ENCODE measurements at regions of chr2 and their contacts with region 1.

Region 1: DNA sequence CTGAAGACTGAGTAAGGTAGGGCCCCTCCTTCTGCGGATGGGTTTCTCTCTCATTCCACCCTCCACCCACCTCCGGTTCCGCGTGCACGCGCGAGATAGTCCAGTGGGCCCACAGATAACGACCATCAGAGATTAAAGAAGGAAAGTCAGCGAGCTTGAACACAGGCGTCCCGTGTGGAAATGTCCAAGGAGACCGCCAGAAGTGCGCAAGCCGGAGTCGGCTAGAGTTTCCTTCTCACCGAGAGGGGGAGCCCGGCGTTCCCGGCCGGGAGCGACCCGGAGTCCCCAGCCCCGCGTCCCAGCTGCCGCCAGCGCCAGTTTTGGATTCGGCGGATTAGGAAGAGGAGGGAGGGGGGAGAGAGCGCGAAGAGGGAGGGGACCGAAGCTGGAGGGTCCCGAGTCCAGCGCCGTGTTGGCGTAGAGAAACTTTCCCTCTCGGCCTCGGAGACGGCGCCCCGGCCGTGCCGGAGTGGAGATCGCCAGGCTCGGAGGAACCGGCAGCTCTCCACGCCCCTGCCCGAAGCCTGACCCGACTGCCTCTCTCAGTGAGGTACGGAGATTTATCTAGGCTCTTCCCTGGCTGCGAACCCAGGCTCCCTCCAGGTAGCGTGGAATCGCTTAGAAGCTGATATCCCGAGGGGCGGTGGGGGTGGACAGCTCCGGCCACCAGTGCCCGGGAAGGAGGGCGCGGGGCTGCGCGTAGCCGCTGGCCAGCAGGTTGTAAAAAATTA is at the start of gene GULP1:
- DNase-seq: peak; percentile 60 to 86 (median 67)
- ATAC-seq: peak; percentile 69
- H3K4me3 ChIP-seq: peak within 1 kb of the TSS; percentile 75
- H3K27ac ChIP-seq: peak within 1 kb of the TSS; percentile 96
- H3K4me1 ChIP-seq: peaks cover 0 to 15% of the 10 kb centered on the region in 2 experiments; a peak in 3 of 5 replicates
- H3K27me3 ChIP-seq: no peaks in the 10 kb centered on the region
- CTCF ChIP-seq: peak; percentile 50 to 75 (median 61)
- EP300 ChIP-seq: peak; percentile 37; the same call in 1 of the 2 replicates
- POLR2A ChIP-seq: no peak; the same call in 1 of the 2 replicates
- RAD21 ChIP-seq: peak in 1 of 2 experiments; percentile 46; a peak in 3 of 4 replicates
- polyA plus RNA-seq, gene GULP1: 8.5 to 8.6 TPM

Region 2: DNA sequence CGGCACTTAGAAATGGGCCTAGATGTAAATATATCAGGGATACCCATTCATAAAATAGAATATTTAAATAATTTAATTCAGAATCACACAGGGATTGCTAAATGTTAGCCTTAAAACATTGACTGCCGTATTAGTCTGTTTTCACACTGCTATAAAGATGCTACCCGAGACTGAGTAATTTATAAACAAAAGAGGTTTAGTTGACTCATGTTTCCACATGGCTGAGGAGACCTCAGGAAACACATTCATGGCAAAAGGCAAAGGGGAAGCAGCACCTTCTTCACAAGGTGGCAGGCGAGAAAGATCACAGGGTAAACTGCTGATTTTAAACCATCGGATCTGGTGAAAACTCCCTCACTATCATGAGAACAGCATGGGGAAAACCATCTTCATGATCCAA is 223.7 kb before region 1 on chr2:
- CTCF ChIA-PET with region 1: no interaction called
- POLR2A ChIA-PET with region 1: no interaction called
- in situ Hi-C with region 1: no loop called
- intact Hi-C with region 1: loop called (anchors 10 kb)
- DNase-seq: no peak
- ATAC-seq: no peak
- H3K4me3 ChIP-seq: no peak overlapping the region
- H3K27ac ChIP-seq: no peak overlapping the region
- H3K4me1 ChIP-seq: no peaks in the 10 kb centered on the region
- H3K27me3 ChIP-seq: no peaks in the 10 kb centered on the region
- CTCF ChIP-seq: no peak
- EP300 ChIP-seq: no peak
- POLR2A ChIP-seq: no peak
- RAD21 ChIP-seq: no peak

Region 3: GRCh38 chr2:188122985-188123384 is 168.8 kb before region 1 on chr2:
- CTCF ChIA-PET with region 1: no interaction called
- POLR2A ChIA-PET with region 1: no interaction called
- in situ Hi-C with region 1: no loop called
- intact Hi-C with region 1: no loop called
- DNase-seq: no peak
- ATAC-seq: no peak
- H3K4me3 ChIP-seq: no peak overlapping the region
- H3K27ac ChIP-seq: no peak overlapping the region
- H3K4me1 ChIP-seq: 0 out of 5 replicates have a peak, but pooled peaks cover 0 to 3% of the 10 kb centered on the region in 2 experiments
- H3K27me3 ChIP-seq: no peaks in the 10 kb centered on the region
- CTCF ChIP-seq: no peak
- EP300 ChIP-seq: no peak
- POLR2A ChIP-seq: no peak
- RAD21 ChIP-seq: no peak

Region 4: DNA sequence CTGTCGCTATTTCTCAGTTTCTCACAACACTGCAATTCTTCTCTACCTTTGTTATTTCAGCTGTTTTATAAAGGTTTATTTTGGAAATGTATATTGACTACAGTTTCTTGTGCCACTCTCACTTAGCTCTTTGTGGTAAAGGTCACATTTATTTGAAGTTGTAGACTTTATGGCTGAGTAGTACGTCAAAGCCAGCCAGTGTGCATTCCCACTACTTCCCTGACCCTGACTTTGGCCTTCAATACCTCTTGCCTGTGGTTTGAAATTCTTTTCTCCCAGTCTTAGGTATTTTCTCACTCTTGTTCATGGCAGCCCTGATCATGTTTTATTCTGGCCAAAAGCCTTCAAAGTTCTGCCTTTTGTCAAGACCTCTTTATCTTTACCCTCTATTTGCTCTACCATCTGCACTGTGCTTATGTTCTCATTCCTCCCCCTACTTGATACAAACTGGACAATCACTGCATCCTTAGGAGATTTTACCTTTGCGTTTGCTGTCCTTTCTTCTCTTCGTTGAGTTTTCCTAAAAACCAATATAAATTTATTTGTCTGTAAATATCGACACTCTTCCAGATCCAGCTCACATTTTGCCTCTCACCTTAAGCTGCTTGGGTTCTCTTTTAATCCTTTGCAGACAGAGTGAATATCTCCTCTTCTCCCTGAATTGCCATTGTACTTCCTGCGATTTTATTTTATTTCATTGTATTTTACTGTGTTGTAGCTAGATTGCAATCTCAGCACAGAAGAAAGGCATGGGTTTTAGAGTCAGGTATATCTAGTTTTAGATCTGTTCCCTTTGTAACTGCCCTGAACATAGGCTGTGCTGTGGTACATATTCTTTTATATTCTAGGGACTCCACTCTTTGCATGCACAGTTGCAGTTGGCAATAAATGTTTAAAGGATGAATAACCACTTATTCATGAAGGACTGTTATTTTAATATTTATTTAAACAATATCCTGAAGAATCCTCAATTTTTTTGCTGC is 31.1 kb after region 1 on chr2:
- CTCF ChIA-PET with region 1: no interaction called
- POLR2A ChIA-PET with region 1: interaction called, 4 read pairs
- in situ Hi-C with region 1: no loop called
- intact Hi-C with region 1: loop called (anchors 2 kb)
- DNase-seq: no peak
- ATAC-seq: no peak; the same call in 2 of the 3 replicates
- H3K4me3 ChIP-seq: no peak overlapping the region
- H3K27ac ChIP-seq: no peak overlapping the region
- H3K4me1 ChIP-seq: peaks cover 6 to 11% of the 10 kb centered on the region in 2 experiments; a peak in 4 of 5 replicates
- H3K27me3 ChIP-seq: no peaks in the 10 kb centered on the region
- CTCF ChIP-seq: no peak
- EP300 ChIP-seq: no peak
- POLR2A ChIP-seq: no peak
- RAD21 ChIP-seq: no peak

Region 5: DNA sequence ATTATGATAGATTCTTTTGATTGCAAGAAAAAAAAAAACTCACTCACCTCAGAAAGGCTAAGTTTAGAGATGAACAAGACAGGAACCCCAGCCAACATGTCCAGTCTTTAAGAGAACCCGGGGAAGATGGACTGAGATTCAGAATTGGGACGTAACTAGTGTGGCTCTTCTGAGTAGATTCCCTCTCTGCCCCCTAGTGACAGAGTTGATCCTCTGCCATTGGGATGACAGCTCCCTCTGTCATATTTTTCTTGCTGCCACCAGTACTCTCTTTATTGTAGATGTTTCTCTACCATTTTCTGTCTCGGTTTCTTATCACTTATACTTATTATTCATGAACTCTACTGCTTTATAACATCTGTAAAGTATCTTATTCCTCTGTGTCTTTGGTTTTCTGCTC is 77.6 kb after region 1 on chr2:
- CTCF ChIA-PET with region 1: no interaction called
- POLR2A ChIA-PET with region 1: no interaction called
- in situ Hi-C with region 1: loop called (anchors 5 kb)
- intact Hi-C with region 1: loop called (anchors 1 kb)
- DNase-seq: peak; percentile 11 to 66 (median 32)
- ATAC-seq: peak; percentile 96
- H3K4me3 ChIP-seq: no peak overlapping the region
- H3K27ac ChIP-seq: no peak overlapping the region
- H3K4me1 ChIP-seq: no peaks in the 10 kb centered on the region
- H3K27me3 ChIP-seq: no peaks in the 10 kb centered on the region
- CTCF ChIP-seq: peak; percentile 60 to 77 (median 75)
- EP300 ChIP-seq: no peak
- POLR2A ChIP-seq: no peak
- RAD21 ChIP-seq: peak; percentile 52 to 74

Region 6: DNA sequence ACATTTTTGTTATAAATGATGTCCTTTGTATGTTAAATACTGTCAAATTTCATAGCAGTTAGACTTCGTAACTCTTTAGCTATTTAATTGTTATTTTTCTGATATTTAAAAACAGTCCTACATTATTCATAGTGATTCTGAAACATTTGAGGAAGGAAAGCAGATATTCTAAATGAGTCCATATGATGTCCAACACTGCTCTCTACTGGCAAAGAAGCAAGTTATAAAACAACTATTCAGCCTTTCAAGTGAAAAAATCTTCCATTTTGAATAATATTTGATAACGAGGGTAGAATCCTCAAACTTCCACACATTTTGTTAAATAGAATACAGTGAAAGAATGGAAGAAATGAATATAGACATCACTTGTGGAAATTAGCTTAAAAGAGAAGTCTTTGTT is 220.7 kb after region 1 on chr2:
- CTCF ChIA-PET with region 1: no interaction called
- POLR2A ChIA-PET with region 1: no interaction called
- in situ Hi-C with region 1: no loop called
- intact Hi-C with region 1: loop called (anchors 5 kb)
- DNase-seq: peak in 2 of 4 experiments; percentile 4 to 35
- ATAC-seq: peak; percentile 76
- H3K4me3 ChIP-seq: no peak overlapping the region
- H3K27ac ChIP-seq: no peak overlapping the region
- H3K4me1 ChIP-seq: no peaks in the 10 kb centered on the region
- H3K27me3 ChIP-seq: no peaks in the 10 kb centered on the region
- CTCF ChIP-seq: peak in 2 of 3 experiments; percentile 23 to 59; a peak in 3 of 6 replicates
- EP300 ChIP-seq: no peak
- POLR2A ChIP-seq: no peak
- RAD21 ChIP-seq: peak; percentile 72

Measured in K562 (cell line).